ENCODE measurements at regions of chr6 and their contacts with region 1.

Region 1: GRCh38 chr6:107026965-107027364 is 1.0 kb upstream of the MTRES1 start:
- DNase-seq: no peak

Region 2: DNA sequence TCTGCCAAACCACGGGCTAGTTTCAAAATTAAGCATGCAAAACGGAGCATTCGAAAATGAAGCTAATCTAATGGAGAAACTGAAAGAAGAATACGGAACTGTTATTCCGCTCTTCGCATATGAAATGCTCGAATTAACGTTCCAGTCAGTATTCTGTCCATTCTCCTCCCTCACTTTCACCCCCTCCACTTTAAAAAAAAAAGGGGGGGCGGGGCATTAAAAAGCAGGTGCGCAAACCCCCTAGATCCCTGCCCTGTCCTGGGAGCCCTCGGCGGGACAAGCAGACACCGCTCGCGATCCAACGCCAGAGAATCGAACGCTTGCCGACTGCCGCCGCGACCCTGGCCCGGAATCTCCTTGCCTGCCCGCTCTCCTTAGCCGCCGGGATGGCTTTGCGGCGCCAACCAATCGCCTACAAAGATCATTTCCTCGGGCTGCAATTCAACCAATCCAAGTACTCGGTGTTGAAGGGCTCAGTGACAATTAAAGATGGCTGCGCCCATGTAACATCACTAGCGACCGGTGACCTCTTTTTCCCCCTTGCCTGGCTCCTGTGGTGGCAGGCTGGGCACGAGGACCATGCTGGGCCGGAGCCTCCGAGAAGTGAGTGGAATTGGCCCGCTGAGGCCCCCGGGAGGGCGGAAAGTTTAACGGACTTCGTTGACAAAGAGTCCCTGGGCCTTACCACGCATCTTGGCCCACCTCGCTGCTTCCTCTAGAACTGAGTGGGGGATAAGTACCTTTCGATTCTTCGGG is 397.7 kb before region 1 on chr6 and contains the starts of genes QRSL1 and RTN4IP1:
- intact Hi-C with region 1: loop called (anchors 5 kb)
- DNase-seq: peak; percentile 74 to 95 (median 86)

Measured in head of caudate nucleus (tissue), 42 donors.